ENCODE measurements at regions of chr1 and their contacts with region 1.

Region 1: GRCh38 chr1:24659993-24660665 is 17.0 kb downstream of the SRRM1 start:
- DNase-seq: no peak
- H3K4me3 ChIP-seq: no peak overlapping the region
- H3K27ac ChIP-seq: no peak overlapping the region
- H3K4me1 ChIP-seq: peaks cover 4% of the 10 kb centered on the region
- H3K27me3 ChIP-seq: no peaks in the 10 kb centered on the region
- CTCF ChIP-seq: no peak

Region 2: DNA sequence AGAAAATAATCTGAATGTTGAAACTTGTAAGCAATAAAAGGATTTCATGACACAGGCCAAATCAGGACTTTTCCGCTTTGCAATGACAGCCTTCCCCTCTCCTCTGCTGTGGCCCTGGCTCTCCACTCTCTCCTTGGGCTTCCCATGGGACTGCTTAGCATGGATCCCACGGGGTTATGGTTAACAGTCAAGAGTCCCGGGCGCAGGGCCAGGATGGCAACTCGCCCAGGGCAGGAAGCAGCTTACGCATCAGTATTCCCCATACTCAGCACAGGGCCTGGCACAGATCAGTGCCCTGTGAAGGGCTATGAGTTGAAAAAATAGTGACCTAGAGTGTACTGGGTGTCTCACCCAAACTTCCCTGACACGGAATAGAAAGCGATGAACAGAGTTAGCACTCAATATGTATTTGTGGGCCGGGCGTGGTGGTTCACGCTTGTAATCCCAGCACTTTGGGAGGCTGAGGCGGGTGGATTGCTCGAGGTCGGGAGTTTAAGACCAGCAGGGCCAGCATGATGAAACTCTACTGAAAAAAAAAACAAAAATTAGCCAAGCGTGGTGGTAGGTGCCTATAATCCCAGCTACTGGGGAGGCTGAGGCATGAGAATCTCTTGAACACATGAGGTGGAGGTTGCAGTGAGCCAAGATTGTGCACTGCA is 370.1 kb before region 1 on chr1:
- CTCF ChIA-PET with region 1: no interaction called
- dilution Hi-C with region 1: no loop called
- in situ Hi-C with region 1: no loop called
- intact Hi-C with region 1: no loop called
- DNase-seq: peak; percentile 91
- H3K4me3 ChIP-seq: no peak overlapping the region
- H3K27ac ChIP-seq: peak overlapping the region; percentile 11
- H3K4me1 ChIP-seq: peaks cover 62% of the 10 kb centered on the region
- H3K27me3 ChIP-seq: no peaks in the 10 kb centered on the region
- CTCF ChIP-seq: no peak

Region 3: GRCh38 chr1:24744911-24745710 is 85.0 kb after region 1 on chr1 and contains the start of gene CLIC4:
- CTCF ChIA-PET with region 1: no interaction called
- dilution Hi-C with region 1: no loop called
- in situ Hi-C with region 1: no loop called
- intact Hi-C with region 1: no loop called
- DNase-seq: peak; percentile 100
- H3K4me3 ChIP-seq: peak within 1 kb of the TSS; percentile 82 to 98 (median 97)
- H3K27ac ChIP-seq: peak within 1 kb of the TSS; percentile 92
- H3K4me1 ChIP-seq: peaks cover 24% of the 10 kb centered on the region
- H3K27me3 ChIP-seq: no peaks in the 10 kb centered on the region
- CTCF ChIP-seq: peak in 1 of 2 donors; percentile 46
- total RNA-seq, gene CLIC4: 212 to 547 TPM

Region 4: DNA sequence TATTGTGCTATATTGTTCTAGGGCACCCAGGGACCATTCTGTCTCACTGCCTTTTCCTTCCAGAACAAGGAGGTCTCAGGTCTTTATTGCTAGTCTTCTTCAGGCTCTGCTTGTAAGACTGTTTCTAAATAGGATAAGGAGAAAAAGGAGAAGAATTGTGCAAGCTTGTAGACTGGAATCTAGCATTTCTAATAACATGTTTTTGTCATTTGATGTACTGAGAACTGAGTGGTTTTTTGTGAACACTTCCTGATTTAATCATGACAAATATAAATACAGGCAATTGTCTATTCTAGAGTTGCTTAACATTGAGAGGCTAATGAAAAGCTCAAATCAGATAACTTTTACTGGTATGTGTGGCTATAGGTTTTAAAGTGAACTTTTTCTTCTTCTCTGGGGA is 162.8 kb after region 1 on chr1:
- CTCF ChIA-PET with region 1: no interaction called
- dilution Hi-C with region 1: loop called (anchors 10 kb)
- in situ Hi-C with region 1: no loop called
- intact Hi-C with region 1: no loop called
- DNase-seq: no peak
- H3K4me3 ChIP-seq: no peak overlapping the region
- H3K27ac ChIP-seq: no peak overlapping the region
- H3K4me1 ChIP-seq: no peaks in the 10 kb centered on the region
- H3K27me3 ChIP-seq: no peaks in the 10 kb centered on the region
- CTCF ChIP-seq: no peak